Posterior vena cava (tissue), 2 donors: ENCODE measurements at regions of chr9 and their contacts with region 1.

Region 1: DNA sequence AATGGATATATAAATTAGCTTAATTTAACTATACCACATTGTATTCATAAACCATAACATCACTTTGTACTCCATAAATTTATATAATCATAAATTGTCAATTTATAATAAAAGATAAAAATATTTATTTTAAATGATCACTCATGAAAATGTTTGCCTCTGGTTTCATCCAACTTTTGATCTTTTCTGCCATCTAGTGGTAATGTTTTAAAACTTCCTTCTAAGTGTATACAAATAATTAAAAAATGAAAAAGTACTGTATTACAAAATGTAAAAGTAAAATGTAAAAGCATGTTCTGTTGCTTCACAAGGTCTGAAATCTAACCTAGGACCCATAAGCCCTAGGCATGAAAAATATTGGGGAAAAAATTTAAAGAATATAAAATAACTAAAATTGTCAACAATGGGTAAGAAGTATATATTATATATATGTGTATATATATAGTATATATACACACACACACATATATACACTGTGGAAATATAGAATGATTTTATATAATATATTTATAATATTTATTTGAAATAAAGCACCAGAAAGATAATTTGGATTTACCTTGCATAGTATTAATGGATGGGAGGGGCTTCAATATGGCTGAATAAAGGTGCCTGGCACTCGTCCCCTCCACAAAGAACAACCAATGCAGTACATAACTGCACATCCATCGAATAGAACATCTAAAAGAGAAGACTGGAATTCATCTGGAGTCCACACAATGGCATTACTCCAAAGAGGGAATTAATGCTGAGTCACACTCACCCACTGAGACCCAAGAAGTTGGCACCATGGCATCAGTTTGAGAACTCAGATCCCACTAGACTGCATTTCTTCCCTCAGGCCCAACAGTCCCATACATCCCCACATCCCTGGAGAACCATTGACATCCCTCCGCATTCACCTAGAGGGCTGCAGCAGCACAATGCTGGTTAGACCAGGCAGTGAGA is 32.5 kb downstream of the ANXA1 start:
- DNase-seq: no peak

Region 2: DNA sequence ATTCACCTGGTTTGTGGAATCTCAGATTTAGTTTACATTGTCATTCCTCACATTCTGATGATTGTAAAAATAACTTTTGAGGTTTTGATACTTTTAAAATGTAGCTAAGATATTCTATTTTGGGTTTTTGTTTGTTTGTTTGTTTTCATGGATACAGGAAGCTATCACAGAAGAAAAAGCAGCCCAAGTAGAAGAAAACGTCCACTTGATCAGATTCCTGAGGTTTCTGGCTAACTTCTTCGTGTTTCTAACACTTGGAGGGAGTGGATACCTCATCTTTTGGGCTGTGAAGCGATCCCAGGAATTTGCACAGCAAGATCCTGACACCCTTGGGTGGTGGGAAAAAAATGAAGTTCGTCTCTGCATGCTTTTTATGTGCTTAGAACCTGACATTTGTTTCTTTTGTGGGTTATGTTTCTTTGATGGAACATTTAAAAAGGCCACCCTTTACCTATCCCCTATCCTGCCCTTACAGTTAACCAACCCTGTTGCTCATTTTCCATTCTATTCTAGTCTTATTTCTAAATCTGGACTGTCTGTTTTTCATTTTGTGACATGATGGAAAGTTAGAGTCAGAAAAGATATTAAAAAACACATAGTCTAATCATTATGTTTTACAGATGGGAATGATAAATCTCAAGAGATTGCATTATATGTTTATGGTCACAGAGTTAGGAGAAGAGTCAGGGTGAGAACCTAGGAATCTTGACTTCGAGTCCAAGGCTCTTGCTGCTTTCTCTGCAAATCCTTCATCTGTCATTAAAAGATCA is 395.0 kb before region 1 on chr9:
- intact Hi-C with region 1: no loop called
- DNase-seq: no peak

Region 3: DNA sequence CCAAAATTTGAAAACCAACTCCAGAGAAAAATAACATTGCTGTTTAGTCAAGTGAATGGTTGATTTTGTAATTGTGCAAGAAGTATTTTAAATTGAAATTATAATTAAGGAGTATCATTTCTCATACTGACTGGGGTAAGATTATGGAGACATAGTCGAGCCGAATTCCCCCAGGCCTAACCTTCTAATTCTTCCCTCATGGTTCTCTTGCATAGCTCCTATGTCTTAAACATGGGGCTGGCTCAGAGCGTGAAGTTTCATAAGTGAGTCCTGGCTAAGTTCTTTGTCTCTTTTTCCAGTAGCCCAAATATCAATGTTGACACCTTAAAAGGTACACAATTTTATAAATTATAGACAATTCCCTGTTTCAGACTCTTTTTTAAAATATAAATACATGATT is 79.3 kb before region 1 on chr9:
- intact Hi-C with region 1: loop called (anchors 5 kb)
- DNase-seq: no peak